ENCODE measurements at regions of chr12 and their contacts with region 1.

Region 1: DNA sequence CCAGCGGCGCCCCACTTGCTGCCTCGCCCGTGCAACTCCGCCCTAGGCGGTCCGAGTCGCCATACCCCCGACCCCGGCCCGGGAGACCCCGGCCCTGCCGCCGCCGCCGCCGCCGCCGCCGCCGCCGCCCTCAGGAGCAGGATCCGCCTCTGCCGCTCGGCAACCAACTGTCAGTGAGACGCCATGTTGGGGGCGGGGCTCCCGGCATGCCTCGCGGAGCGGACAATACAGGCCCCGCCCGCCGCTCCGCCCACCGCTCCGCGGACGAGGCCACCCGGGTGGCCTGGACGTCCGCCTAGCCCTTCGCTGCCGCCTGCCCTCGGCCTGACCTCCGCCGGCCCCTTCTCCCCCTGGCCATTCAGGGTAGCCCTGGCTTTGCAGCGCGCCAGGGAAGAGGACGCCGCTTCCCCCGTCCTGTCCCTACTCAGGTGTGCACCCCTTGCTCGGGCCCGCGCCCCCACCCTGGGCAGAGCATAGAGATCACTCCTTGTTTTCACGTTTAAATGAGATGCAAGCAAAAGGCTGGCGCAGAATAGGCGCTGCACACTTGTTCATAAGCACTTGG is at the start of gene HECTD4:
- DNase-seq: no peak
- H3K4me3 ChIP-seq: peak within 1 kb of the TSS; percentile 72
- CTCF ChIP-seq: no peak

Region 2: GRCh38 chr12:111942557-111942956 is 439.8 kb before region 1 on chr12:
- CTCF ChIA-PET with region 1: interaction called, 18 read pairs
- POLR2A ChIA-PET with region 1: no interaction called
- DNase-seq: peak; percentile 46
- H3K4me3 ChIP-seq: no peak overlapping the region
- CTCF ChIP-seq: no peak

Region 3: GRCh38 chr12:112226768-112227167 is 155.5 kb before region 1 on chr12:
- CTCF ChIA-PET with region 1: interaction called, 12 read pairs
- POLR2A ChIA-PET with region 1: no interaction called
- DNase-seq: no peak
- H3K4me3 ChIP-seq: no peak overlapping the region
- CTCF ChIP-seq: no peak

Region 4: GRCh38 chr12:112243255-112244110 is 138.8 kb before region 1 on chr12:
- CTCF ChIA-PET with region 1: interaction called, 14 read pairs
- POLR2A ChIA-PET with region 1: no interaction called
- DNase-seq: no peak
- H3K4me3 ChIP-seq: no peak overlapping the region
- CTCF ChIP-seq: no peak

Region 5: GRCh38 chr12:112419299-112420133 is 37.2 kb after region 1 on chr12:
- CTCF ChIA-PET with region 1: no interaction called
- POLR2A ChIA-PET with region 1: no interaction called
- DNase-seq: peak; percentile 29
- H3K4me3 ChIP-seq: peak overlapping the region; percentile 94
- CTCF ChIP-seq: no peak

Region 6: DNA sequence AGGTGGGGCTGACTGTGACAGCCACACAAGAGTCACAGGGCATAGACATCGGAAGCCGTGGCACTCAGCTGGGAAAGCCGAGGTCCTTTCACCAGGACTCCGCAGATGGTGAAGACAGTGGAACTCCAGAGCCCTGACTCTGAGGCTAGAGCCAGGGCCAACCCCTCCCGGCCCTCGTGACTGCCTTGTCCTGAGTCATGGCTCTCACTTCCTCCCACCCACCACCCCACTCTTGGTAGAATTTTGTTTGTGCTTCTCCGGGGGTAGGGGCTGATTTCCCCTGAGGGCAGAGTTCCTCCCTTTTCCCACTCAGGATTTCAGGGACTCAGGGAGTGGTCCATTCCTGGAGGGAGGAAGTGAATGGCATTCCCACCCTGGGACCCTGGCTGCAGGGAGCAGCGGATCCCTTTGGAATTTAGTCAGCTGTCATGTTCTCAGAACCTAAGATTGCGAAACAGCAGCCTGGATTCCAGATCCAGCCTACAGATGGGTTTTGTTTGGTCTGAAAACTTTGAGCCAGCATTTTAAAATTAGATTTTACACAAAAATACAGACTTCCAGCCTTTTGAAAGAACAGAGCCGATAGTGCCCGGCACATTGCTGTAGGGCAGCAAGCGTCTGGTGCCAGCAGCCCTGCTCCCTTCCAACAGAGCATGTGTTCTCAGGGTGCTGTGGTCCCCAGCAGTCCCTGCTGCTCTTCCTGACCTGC is 889.7 kb after region 1 on chr12:
- CTCF ChIA-PET with region 1: no interaction called
- POLR2A ChIA-PET with region 1: no interaction called
- DNase-seq: peak; percentile 37
- H3K4me3 ChIP-seq: no peak overlapping the region; the same call in 1 of the 2 replicates
- CTCF ChIP-seq: no peak